Left cardiac atrium (tissue), 4 donors: ENCODE measurements at regions of chr9 and their contacts with region 1.

Region 1: GRCh38 chr9:77514886-77515711 is 133.0 kb downstream of the GNA14 start:
- DNase-seq: peak; percentile 39
- ATAC-seq: peak; percentile 87 to 94

Region 2: GRCh38 chr9:77592476-77592875 is 77.4 kb after region 1 on chr9:
- intact Hi-C with region 1: loop called in 1 of 2 experiments (anchors 5 kb)
- DNase-seq: no peak
- ATAC-seq: no peak